ENCODE measurements at regions of chr13 and their contacts with region 1.

Region 1: GRCh38 chr13:107211073-107211472 is 643.1 kb upstream of the ARGLU1 start:
- DNase-seq: peak; percentile 22
- ATAC-seq: peak; percentile 86
- H3K4me3 ChIP-seq: no peak overlapping the region
- H3K27ac ChIP-seq: no peak overlapping the region
- H3K4me1 ChIP-seq: no peaks in the 10 kb centered on the region
- H3K27me3 ChIP-seq: no peaks in the 10 kb centered on the region
- CTCF ChIP-seq: peak; percentile 40 to 80 (median 79); a peak in 5 of 6 replicates
- POLR2A ChIP-seq: no peak
- RAD21 ChIP-seq: peak; percentile 63

Region 2: DNA sequence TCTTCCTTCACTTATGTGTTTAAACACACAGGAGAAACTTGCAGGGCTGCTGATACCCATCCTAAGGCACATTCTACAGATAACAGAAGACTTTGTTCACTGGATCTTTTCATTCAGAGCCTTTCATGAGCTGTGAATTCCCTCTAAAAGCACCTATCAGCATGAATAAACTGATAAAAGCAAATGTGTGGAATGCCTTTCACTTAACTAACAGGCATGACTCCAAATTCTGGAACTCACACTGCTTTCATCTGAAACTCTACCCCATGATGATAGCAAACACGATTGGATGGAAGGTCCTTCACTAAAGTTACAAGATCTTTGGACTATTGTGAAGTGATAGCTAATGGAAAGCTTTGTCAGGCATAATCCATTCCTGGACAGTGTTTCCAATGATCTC is 1132.9 kb before region 1 on chr13:
- CTCF ChIA-PET with region 1: no interaction called
- POLR2A ChIA-PET with region 1: no interaction called
- RAD21 ChIA-PET with region 1: no interaction called
- intact Hi-C with region 1: no loop called
- DNase-seq: no peak
- ATAC-seq: no peak
- H3K4me3 ChIP-seq: no peak overlapping the region
- H3K27ac ChIP-seq: no peak overlapping the region
- H3K4me1 ChIP-seq: no peaks in the 10 kb centered on the region
- H3K27me3 ChIP-seq: no peaks in the 10 kb centered on the region
- CTCF ChIP-seq: no peak
- POLR2A ChIP-seq: no peak
- RAD21 ChIP-seq: no peak

Region 3: GRCh38 chr13:108086678-108087077 is 875.6 kb after region 1 on chr13:
- CTCF ChIA-PET with region 1: no interaction called
- POLR2A ChIA-PET with region 1: no interaction called
- RAD21 ChIA-PET with region 1: no interaction called
- intact Hi-C with region 1: loop called (anchors 1 kb)
- DNase-seq: no peak
- ATAC-seq: no peak
- H3K4me3 ChIP-seq: no peak overlapping the region
- H3K27ac ChIP-seq: no peak overlapping the region
- H3K4me1 ChIP-seq: no peaks in the 10 kb centered on the region
- H3K27me3 ChIP-seq: no peaks in the 10 kb centered on the region
- CTCF ChIP-seq: no peak
- POLR2A ChIP-seq: no peak
- RAD21 ChIP-seq: no peak

Measured in HCT116 (cell line).